ENCODE measurements at regions of chr15 and their contacts with region 1.

Region 1: DNA sequence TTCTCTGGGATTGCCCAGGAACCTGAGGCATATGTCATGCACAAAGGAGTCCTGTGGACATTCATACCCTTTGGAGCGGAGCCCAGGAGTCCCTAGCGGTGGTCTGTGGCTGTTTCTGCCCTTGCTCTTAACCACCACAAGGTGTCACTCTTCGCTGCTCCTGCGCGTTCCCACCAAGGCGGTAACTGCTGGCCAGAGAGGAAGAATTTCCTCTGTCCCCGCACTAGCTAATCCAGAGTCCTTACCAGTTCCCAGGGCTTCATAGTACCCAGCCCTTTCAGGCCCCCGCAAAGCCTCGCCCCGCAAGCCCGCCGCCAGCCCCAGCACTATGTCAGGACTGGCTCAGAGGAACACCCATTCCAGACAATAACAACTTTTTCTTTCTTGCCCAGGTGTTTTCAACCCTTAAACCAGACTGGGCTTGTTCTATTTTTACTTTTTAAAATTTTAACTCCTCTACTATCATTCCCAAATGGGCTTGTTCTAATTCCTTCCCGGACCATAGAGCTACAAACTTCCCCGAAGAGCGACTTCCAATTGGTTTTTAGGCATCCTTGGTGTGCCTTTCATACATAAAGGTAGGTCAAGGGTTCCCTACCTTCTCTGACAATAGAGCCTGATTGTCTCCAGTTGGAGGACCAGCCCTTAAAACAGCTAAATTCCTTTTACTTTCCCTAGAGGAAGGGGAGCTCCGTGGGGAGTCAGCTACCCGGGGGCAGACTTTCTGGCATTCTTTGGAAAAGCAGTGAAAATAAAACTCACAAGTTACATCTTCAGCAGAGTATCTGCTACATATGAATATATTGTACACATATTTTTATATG is 31.8 kb upstream of the ZNF774 start:
- H3K4me3 ChIP-seq: no peak overlapping the region; the same call in 1 of the 2 replicates
- H3K27ac ChIP-seq: no peak overlapping the region
- H3K4me1 ChIP-seq: peaks cover 12% of the 10 kb centered on the region; the same call in 1 of the 2 replicates
- CTCF ChIP-seq: peak; percentile 98

Region 2: DNA sequence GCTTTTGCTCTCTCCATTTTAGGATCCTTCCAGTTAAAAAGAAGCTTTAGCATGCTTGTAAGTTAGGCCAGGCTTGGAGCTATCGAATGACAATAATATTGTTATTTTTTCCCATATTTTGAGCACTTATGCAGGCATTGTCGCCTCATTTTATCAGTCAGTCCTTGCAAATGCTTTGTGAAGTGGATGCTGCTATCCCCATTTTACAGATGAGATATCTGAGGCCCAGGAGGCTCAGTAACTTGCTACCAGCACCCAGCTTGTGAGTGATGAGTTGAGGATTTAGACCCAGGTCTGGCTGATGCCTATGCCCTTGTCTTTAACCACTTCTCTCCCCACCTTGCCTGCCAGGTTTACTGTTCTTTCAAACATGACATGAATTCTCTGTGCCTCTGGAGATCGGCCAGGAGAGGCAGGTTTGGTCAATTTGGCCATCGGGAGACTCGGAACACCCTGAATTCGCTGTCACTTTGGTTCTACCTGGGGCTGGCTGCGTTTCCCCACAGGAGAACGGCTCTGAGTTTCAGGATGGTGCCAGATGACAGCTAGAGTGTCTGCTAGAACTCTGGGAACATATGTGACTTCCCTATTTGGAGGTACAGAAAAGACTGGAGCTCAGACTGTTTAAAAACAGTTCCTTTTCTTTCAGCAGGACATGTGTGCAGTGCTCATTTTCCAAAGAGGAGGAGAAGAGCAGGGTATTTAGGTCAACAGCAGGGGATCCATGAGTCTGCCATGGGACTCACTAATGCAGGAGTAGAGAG is 344.6 kb before region 1 on chr15:
- CTCF ChIA-PET with region 1: no interaction called
- POLR2A ChIA-PET with region 1: no interaction called
- H3K4me3 ChIP-seq: no peak overlapping the region
- H3K27ac ChIP-seq: no peak overlapping the region
- H3K4me1 ChIP-seq: 0 out of 2 replicates have a peak, but pooled peaks cover 3% of the 10 kb centered on the region
- CTCF ChIP-seq: no peak

Region 3: DNA sequence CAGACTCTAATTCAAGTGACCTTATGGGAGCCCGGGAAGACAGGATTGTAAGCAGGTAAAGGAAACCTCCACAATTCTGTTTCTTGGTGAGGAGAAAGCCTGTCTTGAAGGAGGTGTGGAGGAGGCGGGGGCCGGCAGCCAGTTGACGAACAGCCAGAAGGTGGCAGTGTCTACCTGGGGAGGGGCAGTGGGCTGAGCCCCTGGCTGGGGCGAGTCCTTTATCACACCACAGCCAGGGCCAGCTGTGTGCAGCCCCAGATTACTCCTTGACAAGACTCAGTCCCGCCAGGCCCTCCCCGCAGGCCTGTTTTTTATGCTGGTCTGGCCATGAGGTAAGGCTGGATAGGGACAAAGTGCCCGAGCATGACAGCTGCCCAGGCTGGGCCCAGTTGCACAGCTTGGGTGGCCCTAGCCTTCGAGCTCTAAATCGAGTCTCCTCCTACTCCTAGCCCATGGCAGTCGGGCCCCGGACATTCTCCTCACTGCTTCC is 177.1 kb before region 1 on chr15:
- CTCF ChIA-PET with region 1: interaction called, 12 read pairs
- POLR2A ChIA-PET with region 1: no interaction called
- H3K4me3 ChIP-seq: no peak overlapping the region
- H3K27ac ChIP-seq: no peak overlapping the region
- H3K4me1 ChIP-seq: no peaks in the 10 kb centered on the region
- CTCF ChIP-seq: peak; percentile 94

Region 4: DNA sequence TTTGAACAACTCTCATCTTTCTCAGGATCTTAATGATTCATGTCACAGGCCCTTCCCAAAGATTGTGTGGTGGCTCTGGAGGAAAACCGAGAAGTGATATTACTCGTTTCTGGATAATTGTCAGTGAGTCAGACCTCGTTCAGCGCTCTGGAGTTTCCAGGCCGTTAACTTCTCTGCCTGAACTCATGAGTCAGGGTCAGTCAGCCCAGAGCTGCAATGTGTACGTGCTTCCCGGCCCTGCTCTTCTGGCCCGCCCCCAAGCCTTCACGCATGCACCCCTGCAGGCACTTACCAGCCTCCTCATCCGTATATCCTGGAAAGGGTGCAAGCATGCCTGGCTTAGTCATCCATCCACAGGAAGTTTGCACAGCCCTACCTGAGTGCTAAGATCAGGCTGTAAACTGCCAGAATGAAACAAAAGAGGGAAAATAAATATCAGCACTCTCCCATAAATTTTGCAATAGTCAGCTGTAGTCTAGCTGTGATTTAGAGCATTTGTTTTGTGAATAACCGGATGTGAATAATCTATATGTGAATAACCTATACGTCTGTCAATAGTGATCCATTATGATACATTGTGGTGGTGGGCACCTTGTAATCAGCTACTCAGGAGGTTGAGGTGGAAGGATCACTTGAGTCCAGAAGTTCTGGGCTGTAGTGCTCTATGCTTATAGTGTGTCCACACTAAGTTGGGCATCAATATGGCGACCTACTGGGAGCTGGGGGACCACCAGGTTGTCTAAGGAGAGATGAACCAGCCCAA is 154.4 kb before region 1 on chr15:
- CTCF ChIA-PET with region 1: no interaction called
- POLR2A ChIA-PET with region 1: no interaction called
- H3K4me3 ChIP-seq: no peak overlapping the region
- H3K27ac ChIP-seq: peak overlapping the region; percentile 24; the same call in 1 of the 2 replicates
- H3K4me1 ChIP-seq: no peaks in the 10 kb centered on the region
- CTCF ChIP-seq: no peak

Region 5: DNA sequence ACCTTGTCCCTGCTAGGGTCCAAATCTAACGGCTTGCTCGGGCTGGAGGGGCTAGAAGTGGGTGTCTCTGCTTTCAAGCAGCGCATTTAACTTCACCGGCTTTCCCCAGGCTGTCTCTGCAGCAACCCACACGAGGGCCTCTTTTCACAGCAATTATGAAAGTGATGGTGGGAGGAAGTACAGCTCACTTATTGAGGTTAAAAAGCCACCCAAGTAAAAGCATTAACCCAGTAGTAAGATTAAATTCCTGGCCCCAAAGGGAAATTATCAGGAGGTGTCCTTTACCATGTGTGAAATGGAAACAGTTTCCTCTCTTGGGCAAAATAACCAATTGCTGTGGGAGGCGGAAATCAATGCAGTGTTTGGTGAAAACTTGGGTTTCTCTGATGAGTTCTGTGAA is 13.7 kb before region 1 on chr15:
- CTCF ChIA-PET with region 1: interaction called, 56 read pairs
- POLR2A ChIA-PET with region 1: interaction called, 3 read pairs
- H3K4me3 ChIP-seq: no peak overlapping the region
- H3K27ac ChIP-seq: no peak overlapping the region
- H3K4me1 ChIP-seq: no peaks in the 10 kb centered on the region
- CTCF ChIP-seq: no peak

Region 6: GRCh38 chr15:90362936-90363212 is 42.6 kb after region 1 on chr15:
- CTCF ChIA-PET with region 1: interaction called, 28 read pairs
- POLR2A ChIA-PET with region 1: no interaction called
- H3K4me3 ChIP-seq: no peak overlapping the region
- H3K27ac ChIP-seq: no peak overlapping the region
- H3K4me1 ChIP-seq: no peaks in the 10 kb centered on the region
- CTCF ChIP-seq: no peak

Region 7: DNA sequence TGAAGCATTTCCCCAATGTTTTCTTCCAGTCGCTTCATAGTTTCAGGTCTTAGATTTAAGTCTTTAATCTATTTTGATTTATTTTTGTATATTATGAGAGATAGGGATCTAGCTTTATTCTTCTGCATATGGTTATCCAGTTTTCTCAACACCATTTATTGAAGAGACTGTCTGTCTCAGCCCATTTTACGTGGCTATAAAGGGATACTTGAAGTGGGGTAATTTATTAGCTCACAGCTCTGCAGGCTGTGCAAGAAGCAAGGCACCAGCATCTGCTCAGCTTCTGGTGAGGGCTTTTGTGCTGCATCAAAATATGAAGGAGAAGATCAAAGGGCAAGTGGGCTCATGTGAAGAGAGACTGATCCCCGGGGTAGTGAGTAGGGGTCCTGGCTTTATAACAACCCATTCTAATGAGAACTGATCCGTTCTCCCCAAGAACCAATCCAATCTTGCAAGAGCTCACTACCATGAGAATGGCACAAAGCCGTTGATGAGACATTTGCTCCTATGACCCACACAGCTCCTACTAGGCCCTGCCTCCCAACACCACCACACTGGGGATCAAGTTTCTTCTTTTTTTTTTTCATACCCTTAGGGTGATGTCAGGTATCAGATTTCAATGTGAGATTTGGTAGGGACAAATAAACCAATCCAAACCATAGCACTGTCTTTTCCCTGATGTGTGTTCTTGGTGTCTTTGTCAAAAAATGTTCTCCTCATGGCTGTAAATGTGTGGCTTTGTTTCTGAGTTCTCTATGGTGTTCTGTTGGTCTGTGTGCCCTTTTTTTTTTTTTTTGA is 131.0 kb after region 1 on chr15:
- CTCF ChIA-PET with region 1: interaction called, 11 read pairs
- POLR2A ChIA-PET with region 1: no interaction called
- H3K4me3 ChIP-seq: no peak overlapping the region
- H3K27ac ChIP-seq: no peak overlapping the region
- H3K4me1 ChIP-seq: peaks cover 9% of the 10 kb centered on the region
- CTCF ChIP-seq: no peak

Region 8: GRCh38 chr15:90482124-90483011 is 162.1 kb after region 1 on chr15:
- CTCF ChIA-PET with region 1: interaction called, 225 read pairs
- POLR2A ChIA-PET with region 1: no interaction called
- H3K4me3 ChIP-seq: no peak overlapping the region
- H3K27ac ChIP-seq: no peak overlapping the region
- H3K4me1 ChIP-seq: no peaks in the 10 kb centered on the region
- CTCF ChIP-seq: peak; percentile 80

Region 9: GRCh38 chr15:90886041-90886614 is 565.9 kb after region 1 on chr15:
- CTCF ChIA-PET with region 1: interaction called, 34 read pairs
- POLR2A ChIA-PET with region 1: no interaction called
- H3K4me3 ChIP-seq: no peak overlapping the region
- H3K27ac ChIP-seq: no peak overlapping the region
- H3K4me1 ChIP-seq: no peaks in the 10 kb centered on the region
- CTCF ChIP-seq: peak; percentile 94